ENCODE measurements at regions of chr16 and their contacts with region 1.

Region 1: DNA sequence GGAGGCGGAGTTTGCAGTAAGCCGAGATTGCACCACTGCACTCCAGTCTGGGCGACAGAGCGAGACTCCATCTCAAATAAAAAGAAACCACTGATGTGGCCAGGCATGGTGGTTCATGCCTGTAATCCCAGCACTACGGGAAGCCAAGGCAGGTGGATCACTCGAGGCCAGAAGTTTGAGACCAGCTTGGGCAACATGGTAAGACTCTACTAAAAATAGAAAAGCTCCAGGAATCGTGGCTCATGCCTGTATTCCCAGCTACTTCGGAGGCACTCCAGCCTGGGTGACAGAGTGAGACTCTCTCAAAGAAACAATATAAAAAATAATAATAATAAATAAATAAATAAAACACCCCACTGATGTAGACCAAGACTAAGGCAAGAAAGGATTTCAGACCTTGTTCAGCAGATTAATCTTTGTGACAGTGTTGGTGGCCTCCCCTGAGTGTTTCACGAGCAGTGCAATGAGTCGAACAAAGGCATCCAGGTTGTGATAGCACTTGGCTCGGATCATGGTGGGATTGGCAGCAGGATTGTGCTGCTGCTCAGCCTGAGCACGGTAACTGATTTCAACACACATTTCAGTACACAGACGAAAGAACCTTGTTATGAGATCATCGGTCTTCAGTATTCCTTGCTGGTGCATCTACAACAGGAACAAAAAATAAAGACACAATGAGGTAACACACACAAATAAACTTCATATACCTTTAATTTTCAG is 18.6 kb downstream of the SETD6 start:
- DNase-seq: no peak
- H3K4me3 Mint-ChIP-seq: no peak overlapping the region
- H3K27ac Mint-ChIP-seq: no peak overlapping the region
- H3K4me1 Mint-ChIP-seq: peaks cover 6% of the 10 kb centered on the region
- H3K27me3 Mint-ChIP-seq: no peaks in the 10 kb centered on the region

Region 2: DNA sequence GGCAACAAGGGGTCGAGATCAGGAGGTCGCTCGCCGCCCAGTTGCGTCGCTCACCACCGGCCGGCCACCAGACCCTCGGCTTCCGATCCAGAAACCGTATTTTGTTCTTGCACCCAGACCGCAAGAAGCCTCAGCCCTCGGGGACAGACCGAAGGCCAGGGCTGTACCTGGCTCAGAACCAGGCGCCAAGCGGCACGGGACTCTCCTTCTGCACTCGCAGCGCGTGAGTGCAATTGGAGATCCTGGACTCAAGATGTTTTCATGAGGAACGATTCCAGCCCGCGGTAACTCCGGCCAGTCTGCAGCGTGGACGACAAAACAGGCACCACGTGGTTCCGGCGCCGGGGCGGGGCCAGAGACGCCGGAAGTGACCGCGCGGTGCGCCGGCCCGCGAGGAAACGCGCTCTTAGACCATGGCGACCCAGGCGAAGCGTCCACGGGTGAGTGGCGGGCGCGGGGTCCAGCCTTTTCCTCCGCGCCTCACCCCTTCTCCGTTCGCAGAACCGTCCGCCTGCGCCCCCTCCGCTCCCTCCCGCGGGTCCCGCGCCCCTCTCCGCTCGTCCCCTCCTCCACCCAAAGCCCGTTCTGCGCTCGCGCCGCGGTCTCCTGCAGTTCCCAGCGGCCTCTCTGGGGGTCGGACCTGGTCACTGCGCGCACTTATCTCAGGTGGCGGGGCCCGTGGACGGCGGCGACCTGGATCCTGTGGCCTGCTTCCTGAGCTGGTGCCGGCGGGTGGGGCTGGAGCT is 18.6 kb before region 1 on chr16 and contains the start of gene SETD6:
- intact Hi-C with region 1: loop called (anchors 2 kb)
- DNase-seq: peak; percentile 96
- H3K4me3 Mint-ChIP-seq: peak within 1 kb of the TSS; percentile 94
- H3K27ac Mint-ChIP-seq: peak within 1 kb of the TSS; percentile 91
- H3K4me1 Mint-ChIP-seq: peaks cover 19% of the 10 kb centered on the region
- H3K27me3 Mint-ChIP-seq: no peaks in the 10 kb centered on the region
- total RNA-seq, gene SETD6: 33.4 and 34.4 TPM in 2 replicates

Region 3: DNA sequence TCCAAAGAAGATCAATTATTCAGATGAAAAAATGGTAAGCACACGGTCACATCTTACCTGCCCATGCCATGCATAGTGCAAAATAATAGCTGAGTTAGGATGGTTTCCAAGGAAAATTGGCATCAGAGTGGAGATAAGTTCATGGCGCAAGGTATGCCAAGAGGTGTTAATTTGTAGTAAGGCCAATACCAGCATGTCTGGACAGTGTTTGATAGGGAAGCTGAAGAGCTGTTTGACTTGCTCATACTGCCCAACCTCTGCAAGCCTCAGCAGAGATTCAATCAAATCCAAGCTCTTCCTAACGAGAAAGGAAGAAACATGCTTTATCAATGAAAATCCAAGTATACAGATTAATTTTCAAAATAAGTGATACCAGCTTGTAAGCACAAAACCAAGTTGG is 44.7 kb after region 1 on chr16:
- intact Hi-C with region 1: loop called (anchors 2 kb)
- DNase-seq: no peak
- H3K4me3 Mint-ChIP-seq: no peak overlapping the region
- H3K27ac Mint-ChIP-seq: no peak overlapping the region
- H3K4me1 Mint-ChIP-seq: peaks cover 2% of the 10 kb centered on the region
- H3K27me3 Mint-ChIP-seq: no peaks in the 10 kb centered on the region

Region 4: DNA sequence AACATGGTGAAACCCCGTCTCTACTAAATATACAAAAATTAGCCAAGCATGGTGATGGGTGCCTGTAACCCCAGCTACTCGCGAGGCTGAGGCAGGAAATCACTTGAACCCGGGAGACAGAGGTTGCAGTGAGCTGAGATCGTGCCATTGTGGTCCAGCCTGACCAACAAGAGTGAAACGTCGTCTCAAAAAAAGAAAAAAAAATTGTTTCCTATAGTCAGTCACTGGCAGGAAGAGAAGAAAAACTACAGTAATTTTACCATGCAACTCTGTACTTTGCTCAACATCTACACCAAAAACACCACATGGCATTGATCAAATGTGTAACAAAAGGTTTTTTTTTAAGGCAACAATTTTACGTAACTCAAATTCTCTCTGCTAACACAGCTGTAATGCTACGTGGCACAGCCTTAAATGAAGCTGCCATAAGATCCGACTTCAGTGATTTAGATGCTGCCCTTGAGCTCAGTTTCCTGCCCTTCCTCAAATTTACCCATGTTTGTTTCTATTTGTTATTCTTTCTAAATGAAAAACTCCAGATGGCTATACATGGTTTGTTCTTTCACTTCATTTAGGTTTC is 55.5 kb after region 1 on chr16:
- intact Hi-C with region 1: loop called (anchors 2 kb)
- DNase-seq: no peak
- H3K4me3 Mint-ChIP-seq: no peak overlapping the region
- H3K27ac Mint-ChIP-seq: peak overlapping the region; percentile 7
- H3K4me1 Mint-ChIP-seq: peaks cover 12% of the 10 kb centered on the region
- H3K27me3 Mint-ChIP-seq: no peaks in the 10 kb centered on the region